BJ (cell line): ENCODE measurements at regions of chr17 and their contacts with region 1.

Region 1: GRCh38 chr17:8326511-8327302 is 12.9 kb upstream of the ODF4 start:
- DNase-seq: no peak
- H3K4me3 ChIP-seq: peak overlapping the region; percentile 42
- H3K27me3 ChIP-seq: 0 out of 2 replicates have a peak, but pooled peaks cover 1% of the 10 kb centered on the region
- CTCF ChIP-seq: no peak

Region 2: GRCh38 chr17:8046306-8046928 is 280.3 kb before region 1 on chr17:
- CTCF ChIA-PET with region 1: no interaction called
- POLR2A ChIA-PET with region 1: interaction called, 10 read pairs
- DNase-seq: no peak
- H3K4me3 ChIP-seq: no peak overlapping the region
- H3K27me3 ChIP-seq: peaks cover 22% of the 10 kb centered on the region
- CTCF ChIP-seq: no peak

Region 3: DNA sequence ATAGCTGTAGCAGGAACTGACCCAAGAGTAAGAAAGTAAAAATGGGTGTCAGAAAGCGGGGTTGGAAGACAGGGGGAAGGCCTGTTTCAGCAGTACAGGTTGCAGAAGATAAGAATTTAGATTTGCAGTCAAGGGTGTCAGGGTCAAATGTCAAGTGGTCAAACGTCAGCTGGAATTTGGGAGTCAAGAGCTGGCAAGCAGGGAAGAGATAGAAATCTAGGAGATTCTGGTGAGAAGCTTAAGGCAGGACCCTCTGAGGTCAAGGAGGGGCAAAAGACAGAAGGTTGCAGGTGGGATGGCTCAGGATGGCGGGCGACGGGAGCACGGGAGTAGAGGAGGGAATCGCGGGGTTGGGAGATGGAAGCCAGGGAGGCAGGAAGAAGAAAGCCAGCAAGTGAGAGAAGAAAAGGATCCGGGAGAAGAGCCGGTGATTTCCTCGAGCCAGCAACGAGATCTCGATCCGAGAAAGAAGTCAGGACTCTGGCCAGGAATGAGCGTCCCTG is 31.8 kb before region 1 on chr17:
- CTCF ChIA-PET with region 1: no interaction called
- POLR2A ChIA-PET with region 1: interaction called, 11 read pairs
- DNase-seq: no peak
- H3K4me3 ChIP-seq: peak overlapping the region; percentile 53
- H3K27me3 ChIP-seq: no peaks in the 10 kb centered on the region
- CTCF ChIP-seq: no peak

Region 4: DNA sequence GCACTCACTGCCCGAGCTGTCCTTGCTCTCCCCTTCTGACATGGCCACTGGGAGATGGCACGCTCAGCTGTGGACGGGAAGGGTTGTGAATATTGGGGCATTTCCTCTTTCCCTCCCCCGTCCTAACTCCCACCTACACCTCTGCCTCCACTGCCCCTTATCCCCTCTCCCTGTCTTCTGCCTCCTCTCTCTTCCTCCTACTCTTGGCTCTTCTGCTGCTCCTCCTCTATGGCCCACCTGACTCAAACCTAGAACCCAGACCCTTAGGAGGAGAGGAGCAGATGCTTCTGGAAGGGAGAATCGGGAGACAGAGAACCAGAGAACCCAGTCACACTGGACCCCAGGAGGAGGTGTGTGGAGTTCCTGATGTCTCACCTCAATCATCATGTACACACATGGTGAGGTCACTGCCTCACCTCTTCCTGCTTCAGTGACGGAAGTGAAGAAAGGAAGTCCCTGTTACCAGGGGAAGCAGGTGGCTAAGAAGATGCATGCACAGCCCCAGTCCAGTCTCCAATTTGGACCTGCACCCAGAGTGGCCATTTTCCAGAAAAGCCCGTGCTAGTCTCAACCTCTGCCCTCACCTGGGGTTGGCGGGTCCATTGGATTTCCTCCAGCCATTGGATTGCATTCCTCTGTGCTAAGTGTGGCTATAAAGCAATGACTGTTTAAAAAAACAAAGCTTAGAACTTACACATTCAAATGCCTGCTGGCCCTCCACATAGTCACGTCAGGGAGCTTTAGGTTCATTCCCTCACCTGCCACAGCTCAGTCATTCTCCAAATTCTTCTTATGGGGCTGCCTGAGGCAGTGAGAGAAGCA is 66.9 kb after region 1 on chr17:
- CTCF ChIA-PET with region 1: no interaction called
- POLR2A ChIA-PET with region 1: no interaction called
- DNase-seq: no peak
- H3K4me3 ChIP-seq: no peak overlapping the region
- H3K27me3 ChIP-seq: peaks cover 9% of the 10 kb centered on the region
- CTCF ChIP-seq: no peak